ENCODE measurements at regions of chr11 and their contacts with region 1.

Region 1: DNA sequence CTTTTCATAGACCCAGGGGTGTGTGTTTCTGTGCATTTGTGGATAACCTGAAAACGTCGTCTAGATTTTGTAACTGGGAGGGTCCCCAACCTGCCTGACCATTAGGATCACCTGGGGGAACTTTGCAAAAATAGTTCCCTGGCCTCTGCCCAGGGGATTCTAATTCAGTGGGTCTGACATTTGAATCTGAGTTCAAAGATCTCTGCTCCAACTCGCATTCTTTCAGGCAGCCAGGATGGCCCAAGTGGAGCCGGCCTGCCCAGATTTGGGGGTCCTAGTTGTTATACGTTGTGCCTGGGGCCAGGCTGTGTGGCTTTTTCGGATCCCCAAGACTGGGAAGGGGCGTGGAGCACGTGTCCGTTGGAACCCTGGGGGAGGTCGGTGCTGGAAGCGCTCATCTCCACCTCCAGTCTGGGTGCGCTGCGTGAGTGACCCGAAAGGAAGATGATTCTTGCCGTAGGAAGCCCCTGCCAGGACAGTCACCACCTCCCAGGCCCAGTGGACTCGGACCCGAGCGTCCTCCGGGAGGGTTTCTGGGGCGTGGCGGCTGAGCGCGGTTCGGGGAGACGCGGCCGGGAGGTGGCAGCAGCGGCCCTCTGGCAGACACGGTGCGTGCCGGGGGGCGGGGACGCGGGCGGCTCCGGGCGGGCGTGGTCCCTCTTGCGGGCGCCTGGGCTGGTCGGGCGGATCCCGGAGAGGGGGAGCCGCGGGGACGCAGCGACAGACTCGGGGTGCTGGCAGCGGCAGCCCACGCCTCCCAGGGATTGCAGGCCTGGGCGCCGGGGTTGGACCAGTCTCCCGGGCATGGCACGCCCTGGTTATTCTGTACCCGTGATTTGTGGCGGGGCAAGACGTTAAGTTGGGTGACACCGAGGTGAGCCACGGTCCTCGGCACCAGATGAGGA is 29.2 kb upstream of the PLET1 start:
- DNase-seq: no peak
- H3K4me3 ChIP-seq: peak overlapping the region; percentile 54
- CTCF ChIP-seq: peak; percentile 70

Region 2: GRCh38 chr11:112219476-112220232 is 70.2 kb before region 1 on chr11:
- in situ Hi-C with region 1: loop called (anchors 5 kb)
- DNase-seq: peak; percentile 68
- H3K4me3 ChIP-seq: no peak overlapping the region
- CTCF ChIP-seq: peak; percentile 63

Region 3: GRCh38 chr11:112248201-112248600 is 41.6 kb before region 1 on chr11:
- in situ Hi-C with region 1: no loop called
- DNase-seq: peak; percentile 72
- H3K4me3 ChIP-seq: no peak overlapping the region
- CTCF ChIP-seq: no peak

Region 4: GRCh38 chr11:112410325-112410724 is 120.5 kb after region 1 on chr11:
- in situ Hi-C with region 1: no loop called
- DNase-seq: no peak
- H3K4me3 ChIP-seq: no peak overlapping the region
- CTCF ChIP-seq: no peak

Measured in astrocyte of the cerebellum (primary cell).